MCF 10A (cell line): ENCODE measurements at regions of chr14 and their contacts with region 1.

Region 1: DNA sequence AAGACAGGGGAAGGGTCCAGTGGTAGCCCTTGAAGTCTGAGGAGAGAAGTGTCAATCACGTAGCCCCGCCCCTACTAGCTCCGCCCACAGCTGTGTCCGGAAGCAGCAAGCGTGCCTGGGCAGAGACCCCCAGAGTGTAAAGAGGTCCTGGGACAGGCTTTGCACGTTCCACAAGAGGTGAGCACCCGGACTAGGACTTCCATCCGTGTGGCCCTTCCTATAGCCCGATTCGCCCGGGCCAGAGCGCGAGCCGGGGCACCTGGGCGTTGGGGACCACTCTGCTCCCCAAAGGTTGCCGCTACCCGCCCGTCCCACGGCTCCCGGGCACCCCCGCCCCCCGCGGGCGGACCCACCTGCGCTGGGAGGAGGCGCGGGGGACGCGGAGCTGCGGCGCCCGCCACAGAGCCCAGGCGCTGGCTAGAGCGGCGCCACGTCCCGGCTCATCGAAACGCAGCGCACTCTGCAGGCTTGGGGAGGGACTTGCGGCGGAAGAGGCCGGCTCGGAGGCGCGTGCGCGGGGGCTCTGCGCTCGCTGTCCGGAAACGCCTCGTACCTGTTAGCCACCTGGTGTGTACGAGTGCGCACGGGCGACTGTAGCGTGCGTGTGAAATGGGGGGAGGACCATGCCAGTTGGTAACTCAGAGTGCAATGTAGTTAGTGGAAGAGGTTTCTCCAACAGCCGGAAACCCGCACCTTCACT is at the start of gene RABGGTA:
- DNase-seq: peak; percentile 88
- H3K4me3 Mint-ChIP-seq: peak within 1 kb of the TSS; percentile 89
- H3K27ac Mint-ChIP-seq: peak within 1 kb of the TSS; percentile 16
- H3K4me1 Mint-ChIP-seq: peaks cover 43% of the 10 kb centered on the region
- H3K27me3 Mint-ChIP-seq: no peaks in the 10 kb centered on the region
- CTCF ChIP-seq: peak; percentile 67
- total RNA-seq, gene RABGGTA: 51.7 and 75.0 TPM in 2 replicates

Region 2: DNA sequence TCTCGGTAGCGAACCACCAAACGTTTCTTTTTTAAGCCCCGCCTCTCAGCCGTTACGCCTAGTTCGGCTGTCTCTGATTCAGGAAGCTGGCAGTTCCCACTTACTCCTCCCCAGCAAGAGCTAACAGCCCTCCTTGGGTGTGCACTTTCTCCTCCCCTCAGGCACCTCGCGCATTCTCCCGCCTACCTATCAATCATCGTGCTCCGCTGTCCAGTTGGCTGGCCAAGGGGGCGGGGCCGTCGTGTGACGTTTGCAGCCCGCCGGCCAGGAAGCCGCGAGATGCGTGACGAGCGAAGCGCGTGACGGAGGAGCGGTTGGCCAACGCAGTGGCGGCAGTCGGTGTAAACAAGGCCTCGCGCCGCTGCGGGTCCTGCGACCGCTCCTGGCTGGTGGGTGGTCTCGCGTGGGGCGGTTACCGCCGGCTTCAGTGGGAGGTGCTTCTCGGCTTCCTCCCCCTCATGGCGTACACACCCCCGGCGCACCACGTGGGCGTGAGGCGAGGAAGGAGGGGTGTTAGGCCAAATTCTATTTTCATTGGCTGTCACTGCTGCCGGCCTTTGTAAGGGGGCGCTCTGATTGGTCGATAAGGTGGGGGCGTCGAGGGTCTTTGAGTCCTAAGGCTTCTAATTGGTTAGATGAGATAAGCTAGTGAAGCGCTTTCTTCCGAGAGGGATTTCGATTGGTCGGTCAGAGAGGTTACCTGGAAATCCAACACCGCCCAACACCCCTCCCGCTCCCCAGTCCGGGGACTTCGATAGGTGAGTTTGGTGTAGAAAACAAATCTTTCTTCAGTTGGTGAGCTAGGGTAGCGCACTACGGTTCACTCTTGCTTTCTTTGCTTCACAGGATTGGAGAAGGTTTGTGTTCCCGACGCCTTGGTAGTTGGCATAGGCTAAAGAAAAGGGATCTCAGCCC is 156.5 kb before region 1 on chr14 and contains the starts of genes DCAF11 and NRL:
- CTCF ChIA-PET with region 1: no interaction called
- POLR2A ChIA-PET with region 1: interaction called, 13 read pairs
- intact Hi-C with region 1: no loop called
- DNase-seq: peak; percentile 100
- H3K4me3 Mint-ChIP-seq: peak within 1 kb of the TSS; percentile 97
- H3K27ac Mint-ChIP-seq: peak within 1 kb of the TSS; percentile 99
- H3K4me1 Mint-ChIP-seq: peaks cover 9% of the 10 kb centered on the region
- H3K27me3 Mint-ChIP-seq: no peaks in the 10 kb centered on the region
- CTCF ChIP-seq: no peak
- total RNA-seq, gene DCAF11: 38.6 and 48.8 TPM in 2 replicates
- total RNA-seq, gene NRL: 1.3 and 2.1 TPM in 2 replicates

Region 3: DNA sequence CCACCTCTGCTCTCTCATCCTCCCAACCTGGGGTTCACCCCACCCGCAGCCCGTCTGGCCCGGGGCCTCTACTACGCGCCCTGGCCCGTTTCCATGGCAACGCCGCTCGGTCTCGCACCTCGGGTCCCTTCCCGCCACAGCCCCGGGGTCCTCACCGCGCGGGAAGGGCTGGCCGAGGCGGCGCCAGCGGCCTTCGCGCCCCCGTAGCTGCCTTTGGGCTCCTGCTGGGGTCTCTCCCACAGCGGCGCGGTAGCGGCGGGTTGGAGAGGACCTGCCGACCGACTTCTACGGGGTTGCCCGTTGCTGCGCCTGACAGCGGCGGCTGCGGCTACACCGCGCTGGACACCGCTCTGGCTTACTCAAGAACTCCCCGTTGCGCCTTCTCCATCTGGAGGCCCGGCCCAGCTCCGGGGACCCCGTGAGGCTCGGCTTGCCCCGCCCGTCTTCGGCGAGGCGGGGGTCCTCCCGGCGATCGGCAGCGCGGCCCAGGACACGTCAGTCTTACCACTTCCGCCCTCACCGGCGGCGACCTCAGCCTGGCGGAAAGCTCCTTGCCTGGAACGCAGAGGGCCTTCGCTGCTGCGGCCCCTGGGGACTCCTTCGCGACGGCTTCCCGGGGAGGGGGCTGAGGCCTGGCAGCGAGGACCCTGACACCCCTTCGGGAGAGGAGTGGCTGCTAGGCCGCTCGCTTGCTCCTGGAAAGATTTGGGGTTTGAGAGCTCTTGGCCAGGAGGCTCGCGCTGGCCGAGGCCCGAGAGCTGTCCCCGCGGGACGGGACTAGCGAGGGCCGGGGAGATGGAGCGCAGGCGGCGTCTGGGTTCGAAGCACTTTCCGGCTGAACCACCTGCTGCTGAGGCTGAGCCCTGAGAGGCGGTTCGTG is 75.9 kb before region 1 on chr14 and contains the start of gene TM9SF1:
- CTCF ChIA-PET with region 1: interaction called, 3 read pairs
- POLR2A ChIA-PET with region 1: interaction called, 12 read pairs
- intact Hi-C with region 1: no loop called
- DNase-seq: peak; percentile 84
- H3K4me3 Mint-ChIP-seq: peak within 1 kb of the TSS; percentile 81
- H3K27ac Mint-ChIP-seq: peak within 1 kb of the TSS; percentile 96
- H3K4me1 Mint-ChIP-seq: peaks cover 18% of the 10 kb centered on the region
- H3K27me3 Mint-ChIP-seq: no peaks in the 10 kb centered on the region
- CTCF ChIP-seq: no peak
- total RNA-seq, gene TM9SF1: 67.8 and 103 TPM in 2 replicates

Region 4: GRCh38 chr14:24251880-24252288 is 19.4 kb before region 1 on chr14:
- CTCF ChIA-PET with region 1: interaction called, 457 read pairs
- POLR2A ChIA-PET with region 1: interaction called, 22 read pairs
- intact Hi-C with region 1: no loop called
- DNase-seq: no peak
- H3K4me3 Mint-ChIP-seq: no peak overlapping the region
- H3K27ac Mint-ChIP-seq: no peak overlapping the region
- H3K4me1 Mint-ChIP-seq: peaks cover 7% of the 10 kb centered on the region
- H3K27me3 Mint-ChIP-seq: no peaks in the 10 kb centered on the region
- CTCF ChIP-seq: no peak

Region 5: DNA sequence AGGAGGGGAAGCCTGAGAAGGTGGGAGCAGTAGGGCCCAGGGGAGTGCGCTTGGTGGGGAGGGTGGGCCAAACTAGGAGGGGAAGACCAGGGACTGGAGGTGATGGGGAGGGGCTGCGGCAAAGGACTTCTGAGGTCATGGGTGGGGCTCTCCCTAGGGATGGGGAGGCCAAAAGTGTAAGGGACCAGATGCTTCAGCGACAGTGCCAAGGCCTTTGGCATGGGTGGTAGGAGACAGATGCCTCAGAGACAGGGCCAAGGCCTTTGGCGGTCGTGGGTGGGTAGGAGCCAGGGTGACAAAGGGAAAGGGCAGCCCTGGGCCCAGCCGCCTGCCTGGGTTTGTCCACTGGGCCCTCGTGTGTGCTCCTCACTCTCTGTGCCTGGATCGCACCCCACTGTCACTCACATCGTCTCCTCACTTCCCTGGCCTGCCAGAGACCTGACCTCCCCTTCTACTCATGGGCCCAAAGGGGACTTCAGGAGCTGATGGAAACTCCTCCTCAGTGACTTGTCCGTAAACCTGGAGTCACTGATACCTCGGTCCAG is 13.3 kb after region 1 on chr14:
- CTCF ChIA-PET with region 1: interaction called, 23 read pairs
- POLR2A ChIA-PET with region 1: interaction called, 115 read pairs
- intact Hi-C with region 1: no loop called
- DNase-seq: no peak
- H3K4me3 Mint-ChIP-seq: no peak overlapping the region
- H3K27ac Mint-ChIP-seq: no peak overlapping the region
- H3K4me1 Mint-ChIP-seq: peaks cover 27% of the 10 kb centered on the region
- H3K27me3 Mint-ChIP-seq: no peaks in the 10 kb centered on the region
- CTCF ChIP-seq: no peak

Region 6: GRCh38 chr14:24310646-24311604 is 39.6 kb after region 1 on chr14 and contains the start of gene LTB4R:
- CTCF ChIA-PET with region 1: interaction called, 43 read pairs
- POLR2A ChIA-PET with region 1: interaction called, 16 read pairs
- intact Hi-C with region 1: no loop called
- DNase-seq: peak; percentile 72
- H3K4me3 Mint-ChIP-seq: peak within 1 kb of the TSS; percentile 69
- H3K27ac Mint-ChIP-seq: no peak within 1 kb of the TSS
- H3K4me1 Mint-ChIP-seq: peaks cover 35% of the 10 kb centered on the region
- H3K27me3 Mint-ChIP-seq: no peaks in the 10 kb centered on the region
- CTCF ChIP-seq: peak; percentile 19
- total RNA-seq, gene LTB4R: 15.8 and 19.9 TPM in 2 replicates